Activated CD8-positive, alpha-beta T cell treated with anti-CD3 and anti-CD28 coated beads for 36 hours (primary cell): ENCODE measurements at regions of chr1 and their contacts with region 1.

Region 1: DNA sequence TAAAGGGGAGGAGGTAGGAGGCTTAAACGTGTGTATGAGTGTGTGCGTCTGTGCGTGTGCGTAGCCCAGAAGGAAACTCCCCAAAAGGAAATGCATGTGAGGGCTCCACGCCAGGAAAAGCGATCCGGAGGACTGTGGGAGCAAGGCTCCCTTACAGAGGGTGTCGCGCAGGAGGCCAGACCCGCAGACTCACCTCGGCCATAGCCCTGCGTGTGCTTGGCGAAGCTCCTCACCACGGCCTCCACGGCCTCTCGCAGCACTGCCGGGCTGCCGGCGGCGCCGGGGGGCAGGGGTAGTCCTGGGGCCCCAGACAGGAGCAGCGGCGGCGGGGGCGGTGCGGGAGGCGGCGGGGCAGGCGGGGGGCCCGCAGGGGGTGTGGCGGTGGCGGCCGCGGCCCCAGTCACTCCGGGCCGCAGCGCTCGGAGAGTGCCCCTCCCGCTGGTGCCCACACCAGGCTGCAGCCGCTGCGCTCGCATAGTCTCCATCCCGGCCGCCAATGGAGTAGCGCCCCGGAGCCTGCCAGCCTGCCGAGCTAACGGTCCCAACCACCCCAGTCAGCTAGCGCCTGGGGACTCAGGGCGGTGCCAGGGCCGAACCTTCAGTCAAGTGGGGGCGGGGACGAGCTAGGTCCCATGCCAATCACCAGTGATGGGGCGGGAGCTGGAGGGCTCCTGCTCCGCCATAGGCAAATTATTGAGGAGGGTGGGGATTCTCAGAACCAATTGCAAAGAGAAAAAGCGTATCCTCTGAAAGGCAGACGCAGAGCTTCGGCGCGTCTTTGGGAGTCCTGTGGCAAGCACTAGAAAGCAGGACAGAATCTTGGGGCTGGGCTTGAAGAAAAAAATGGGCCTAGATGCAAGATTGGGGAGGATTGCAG is at the start of gene LIX1L:
- DNase-seq: peak; percentile 98
- ATAC-seq: peak; percentile 89
- H3K4me3 Mint-ChIP-seq: peak within 1 kb of the TSS; percentile 83
- H3K27ac Mint-ChIP-seq: peak within 1 kb of the TSS; percentile 91
- H3K4me1 Mint-ChIP-seq: peaks cover 53% of the 10 kb centered on the region
- H3K27me3 Mint-ChIP-seq: no peaks in the 10 kb centered on the region
- CTCF ChIP-seq: no peak
- total RNA-seq, gene LIX1L: 41.5 to 43.6 TPM

Region 2: GRCh38 chr1:145690624-145691035 is 267.1 kb before region 1 on chr1:
- CTCF ChIA-PET with region 1: no interaction called
- POLR2A ChIA-PET with region 1: no interaction called
- intact Hi-C with region 1: no loop called
- DNase-seq: peak; percentile 66
- ATAC-seq: peak; percentile 95
- H3K4me3 Mint-ChIP-seq: no peak overlapping the region
- H3K27ac Mint-ChIP-seq: peak overlapping the region; percentile 68
- H3K4me1 Mint-ChIP-seq: peaks cover 27% of the 10 kb centered on the region
- H3K27me3 Mint-ChIP-seq: no peaks in the 10 kb centered on the region
- CTCF ChIP-seq: no peak

Region 3: DNA sequence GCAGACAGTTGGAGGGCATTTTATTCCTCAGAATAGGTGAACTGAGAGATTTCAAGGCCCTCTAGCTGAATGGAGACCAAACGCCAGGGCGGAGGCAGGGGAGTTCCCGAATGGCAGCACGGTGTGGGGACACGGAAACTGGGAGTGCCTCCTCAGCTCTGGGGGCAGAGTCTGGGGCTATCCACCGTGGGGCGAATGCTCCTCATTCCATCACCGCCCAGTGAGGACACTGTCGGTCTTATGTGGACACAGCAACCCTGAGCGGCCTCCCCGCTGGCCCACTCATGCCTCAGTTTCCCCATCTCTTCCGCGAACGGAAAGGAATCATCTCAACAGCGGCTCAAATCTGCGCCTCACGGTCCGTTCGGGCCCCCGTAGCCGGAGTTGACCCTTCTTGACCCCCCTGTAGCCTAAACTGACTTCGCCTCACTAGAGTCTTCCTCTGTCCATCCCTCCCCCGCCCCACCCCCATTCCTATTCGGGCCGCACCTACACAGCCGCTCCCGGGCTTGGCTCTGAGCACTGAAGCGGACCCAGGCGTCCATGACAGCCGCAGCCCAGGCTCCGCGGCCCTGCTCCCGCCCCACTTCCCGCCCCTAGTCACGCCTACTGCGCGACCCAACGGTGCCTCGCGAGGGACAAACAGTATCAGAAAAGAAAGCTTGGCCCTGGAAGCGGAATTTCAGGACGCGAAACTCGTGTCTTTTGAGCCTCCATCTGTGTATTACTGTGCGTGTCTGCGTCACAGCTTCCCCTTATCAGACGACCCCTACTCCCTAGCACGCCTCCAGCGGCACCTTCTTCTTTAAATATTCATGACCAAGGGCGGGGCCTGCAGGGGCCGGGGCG is 39.3 kb before region 1 on chr1 and contains the start of gene PEX11B:
- CTCF ChIA-PET with region 1: interaction called, 3 read pairs
- POLR2A ChIA-PET with region 1: interaction called, 20 read pairs
- intact Hi-C with region 1: no loop called
- DNase-seq: peak; percentile 96
- ATAC-seq: peak; percentile 92
- H3K4me3 Mint-ChIP-seq: peak within 1 kb of the TSS; percentile 96
- H3K27ac Mint-ChIP-seq: peak within 1 kb of the TSS; percentile 97
- H3K4me1 Mint-ChIP-seq: peaks cover 51% of the 10 kb centered on the region
- H3K27me3 Mint-ChIP-seq: no peaks in the 10 kb centered on the region
- CTCF ChIP-seq: no peak
- total RNA-seq, gene PEX11B: 25.8 to 26.3 TPM

Region 4: DNA sequence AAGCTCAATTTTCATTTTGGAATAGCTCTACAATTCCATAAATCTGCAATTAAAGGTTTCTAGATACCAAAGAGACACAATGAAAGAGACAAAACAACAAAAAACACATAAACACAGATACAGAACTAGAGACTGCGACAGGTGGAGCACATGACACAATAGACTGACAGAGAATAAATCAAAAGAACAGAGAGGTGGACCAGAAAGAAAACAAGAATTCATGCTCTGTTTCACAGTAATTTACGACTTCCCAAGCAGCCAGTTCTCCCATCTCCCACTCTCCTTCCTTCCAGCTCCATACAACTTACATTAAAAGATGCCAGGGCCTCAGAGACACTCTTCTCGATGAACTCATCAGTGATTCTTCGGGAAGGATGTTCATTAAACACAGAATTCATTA is 15.3 kb before region 1 on chr1:
- CTCF ChIA-PET with region 1: interaction called, 7 read pairs
- POLR2A ChIA-PET with region 1: interaction called, 11 read pairs
- intact Hi-C with region 1: no loop called
- DNase-seq: no peak
- ATAC-seq: no peak
- H3K4me3 Mint-ChIP-seq: no peak overlapping the region
- H3K27ac Mint-ChIP-seq: no peak overlapping the region
- H3K4me1 Mint-ChIP-seq: peaks cover 7% of the 10 kb centered on the region
- H3K27me3 Mint-ChIP-seq: no peaks in the 10 kb centered on the region
- CTCF ChIP-seq: no peak